Upper lobe of right lung (tissue), 1 donor: ENCODE measurements at regions of chr1 and their contacts with region 1.

Region 1: DNA sequence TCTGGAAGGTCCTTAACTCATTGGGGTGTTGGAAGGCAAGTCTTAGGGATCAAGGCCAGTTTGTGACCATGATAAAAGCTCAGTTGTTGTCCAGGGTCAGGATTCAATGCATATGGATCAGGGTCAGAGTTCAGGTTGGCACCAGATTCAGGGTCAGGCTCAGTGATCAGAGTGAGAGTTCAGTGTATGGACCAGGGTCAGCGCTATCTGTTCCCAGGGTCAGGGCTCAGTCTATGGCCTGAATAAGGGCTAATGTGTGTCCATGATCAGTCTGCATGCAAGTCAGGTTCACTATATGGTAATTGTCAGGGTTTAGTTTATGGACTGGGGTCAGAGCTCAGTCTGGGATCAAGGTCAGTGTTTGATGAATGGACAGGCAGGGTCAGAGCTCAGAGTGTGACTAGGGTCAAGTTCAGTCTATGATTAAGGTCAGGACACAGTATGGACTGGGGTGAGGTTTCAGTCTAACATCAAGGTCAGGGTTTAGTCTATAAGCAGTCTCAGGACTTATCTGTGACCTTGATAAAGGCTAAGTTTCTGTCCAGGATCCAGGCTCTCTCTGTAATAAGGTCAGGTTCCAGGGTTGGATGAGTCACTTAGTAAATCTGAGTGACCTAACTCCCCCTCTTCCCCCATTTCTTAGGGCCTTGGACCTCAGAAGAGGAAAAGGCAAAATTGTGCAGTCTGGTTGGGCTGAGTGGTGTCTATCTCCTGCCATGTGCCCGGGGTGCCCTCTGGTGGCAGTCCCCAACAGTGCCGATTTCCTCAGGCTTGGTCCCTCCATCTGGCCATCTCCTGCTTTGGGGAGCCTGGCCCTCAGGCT is 23.8 kb downstream of the KNCN start:
- DNase-seq: peak; percentile 87
- ATAC-seq: peak; percentile 88
- H3K4me3 ChIP-seq: no peak overlapping the region
- H3K27ac ChIP-seq: no peak overlapping the region
- H3K4me1 ChIP-seq: peaks cover 4% of the 10 kb centered on the region
- H3K27me3 ChIP-seq: peaks cover 24% of the 10 kb centered on the region
- CTCF ChIP-seq: peak; percentile 92

Region 2: DNA sequence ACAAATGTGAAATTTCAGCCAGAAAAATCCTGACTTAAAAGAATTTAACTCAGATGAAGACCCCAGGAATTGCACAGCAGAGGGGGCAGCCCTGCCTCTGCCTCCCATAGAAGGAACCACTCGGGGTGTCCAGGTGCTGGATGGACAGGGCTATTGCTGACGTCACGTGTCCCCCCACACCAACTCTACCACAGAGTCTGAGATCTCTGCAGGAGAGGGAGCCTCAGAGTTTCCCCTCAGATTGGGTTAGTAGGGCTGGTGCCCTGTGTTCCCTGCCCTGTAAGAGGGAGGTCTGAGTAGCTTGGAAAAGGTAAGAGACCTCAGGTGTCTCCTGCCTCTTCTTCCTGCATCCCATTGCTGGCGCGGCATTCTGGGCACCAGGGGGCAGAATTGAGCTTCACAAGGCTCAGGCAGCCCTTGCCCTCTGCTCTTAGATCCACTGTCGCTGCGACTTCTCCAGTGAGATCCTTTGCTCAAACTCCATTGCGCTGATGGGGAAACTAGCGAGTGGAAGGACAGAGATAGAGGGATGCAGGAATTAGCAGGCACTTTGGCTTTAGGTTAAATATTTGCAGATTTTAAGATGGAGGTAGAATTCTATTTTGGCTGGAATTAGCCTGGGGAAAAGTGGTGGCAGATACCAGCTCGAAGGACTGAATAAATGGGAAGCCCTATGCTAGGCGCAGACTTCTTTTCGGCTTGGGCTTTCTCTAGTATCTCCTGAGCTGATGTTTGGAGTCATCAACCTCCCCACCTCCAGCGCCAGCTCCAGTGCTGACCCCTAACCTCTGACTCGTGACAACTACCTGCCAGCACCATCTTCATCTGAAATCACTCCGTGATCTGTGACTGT is 80.8 kb before region 1 on chr1:
- intact Hi-C with region 1: no loop called
- DNase-seq: peak; percentile 88
- ATAC-seq: peak; percentile 74
- H3K4me3 ChIP-seq: no peak overlapping the region
- H3K27ac ChIP-seq: no peak overlapping the region
- H3K4me1 ChIP-seq: peaks cover 18% of the 10 kb centered on the region
- H3K27me3 ChIP-seq: peaks cover 38% of the 10 kb centered on the region
- CTCF ChIP-seq: peak; percentile 89

Region 3: DNA sequence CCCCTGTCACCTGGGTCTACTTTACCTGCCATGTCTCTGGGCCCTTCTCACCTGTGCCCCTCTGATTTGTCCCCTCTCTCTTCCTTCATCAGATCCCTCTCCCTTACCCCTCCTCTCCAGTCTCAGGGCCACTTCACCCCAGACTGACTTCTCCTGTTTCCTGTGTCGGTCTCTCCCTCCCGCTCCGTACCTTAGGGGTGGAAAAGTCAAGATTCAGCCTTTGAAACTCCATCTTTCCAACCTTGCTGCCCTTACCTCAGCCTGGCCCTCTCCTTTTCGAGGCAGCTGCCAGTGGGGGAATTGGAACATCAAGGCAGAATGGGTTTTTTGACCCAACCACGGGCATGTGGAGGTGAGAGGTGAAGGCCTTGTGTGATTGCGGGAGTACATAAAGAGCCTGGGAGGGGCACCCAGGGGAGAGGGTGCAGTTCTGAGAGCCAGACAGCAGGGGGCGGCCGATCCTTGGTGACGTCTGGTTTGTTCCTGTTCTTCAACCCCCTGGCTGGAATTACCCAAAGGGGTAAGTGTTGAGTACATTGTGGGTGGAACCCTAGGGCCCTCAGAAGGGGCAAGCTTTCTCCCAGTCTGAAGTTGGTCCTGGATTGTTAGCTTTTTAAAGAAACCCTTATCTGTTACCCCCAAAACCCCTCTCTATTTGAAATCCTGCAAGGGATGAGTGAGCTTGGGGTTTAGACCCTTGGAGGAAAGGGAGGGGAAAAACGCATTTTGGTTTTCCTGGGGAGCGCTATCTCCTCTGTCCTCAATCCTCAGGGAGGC is 50.3 kb before region 1 on chr1:
- intact Hi-C with region 1: loop called (anchors 10 kb)
- DNase-seq: peak; percentile 87
- ATAC-seq: peak; percentile 94
- H3K4me3 ChIP-seq: no peak overlapping the region
- H3K27ac ChIP-seq: no peak overlapping the region
- H3K4me1 ChIP-seq: no peaks in the 10 kb centered on the region
- H3K27me3 ChIP-seq: peaks cover 24% of the 10 kb centered on the region
- CTCF ChIP-seq: peak; percentile 91